GM13977 (cell line): ENCODE measurements at regions of chr11 and their contacts with region 1.

Region 1: GRCh38 chr11:43282607-43283440 is 29.0 kb upstream of the API5 start:
- DNase-seq: peak; percentile 45
- CTCF ChIP-seq: peak; percentile 95

Region 2: GRCh38 chr11:42770444-42771065 is 512.3 kb before region 1 on chr11:
- in situ Hi-C with region 1: loop called (anchors 10 kb)
- DNase-seq: peak; percentile 28
- CTCF ChIP-seq: peak; percentile 74

Region 3: DNA sequence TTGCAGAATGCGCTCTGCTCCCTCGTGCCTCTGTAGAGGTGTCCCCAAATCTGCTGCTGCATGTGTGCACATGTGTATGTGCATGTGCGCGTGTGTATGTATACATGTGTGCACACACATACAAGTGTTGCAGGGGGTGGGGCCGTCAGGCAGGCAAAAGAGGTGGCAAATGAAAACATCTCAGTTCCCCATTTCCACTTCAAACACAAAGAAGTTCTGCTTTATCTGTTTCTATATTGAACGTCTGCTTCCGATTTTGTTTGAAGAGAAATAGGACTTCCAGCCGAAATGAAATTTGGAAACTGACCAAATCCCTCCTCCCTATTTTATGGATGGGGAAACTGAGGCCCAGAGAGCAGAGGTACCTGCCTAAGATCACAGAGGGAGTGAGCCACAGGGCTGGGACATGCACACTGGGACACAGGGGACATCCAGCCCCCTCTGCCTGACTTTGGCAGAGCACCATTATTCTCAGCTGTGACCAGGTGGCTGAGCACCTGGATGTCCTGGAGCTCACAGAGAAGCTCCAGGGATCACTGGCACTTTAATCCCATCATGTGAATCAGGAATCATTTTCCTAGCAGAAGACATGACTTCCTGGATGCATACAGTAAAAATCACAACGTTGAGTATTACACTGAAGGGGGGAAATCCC is 1068.3 kb after region 1 on chr11:
- in situ Hi-C with region 1: no loop called
- DNase-seq: peak; percentile 48
- CTCF ChIP-seq: no peak